ENCODE measurements at regions of chr13 and their contacts with region 1.

Region 1: DNA sequence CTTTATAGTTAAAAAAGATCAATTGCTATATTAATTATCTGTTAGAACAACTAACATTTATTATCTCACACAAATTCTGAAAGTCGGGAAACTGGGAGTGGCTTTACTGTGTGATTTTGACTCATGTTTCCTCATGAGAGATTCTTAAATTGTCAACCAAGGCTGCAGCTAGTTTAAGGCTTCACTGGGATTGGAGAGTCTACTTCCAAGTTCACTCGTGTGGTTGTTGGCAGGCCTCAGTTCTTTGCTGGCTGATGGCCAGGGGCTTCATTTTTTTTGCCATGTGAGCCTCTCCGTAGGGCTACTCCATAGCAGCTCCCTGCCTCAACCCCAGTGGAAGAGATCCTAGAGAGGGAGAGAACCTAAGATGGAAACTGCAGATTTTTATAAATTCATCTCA is 24.5 kb upstream of the LPAR6 start:
- DNase-seq: peak; percentile 56 to 65
- ATAC-seq: peak in 3 of 4 donors; percentile 42 to 66 (median 50)
- H3K4me3 ChIP-seq: no peak overlapping the region
- H3K27ac ChIP-seq: peak overlapping the region; percentile 14
- H3K4me1 ChIP-seq: peaks cover 22% of the 10 kb centered on the region
- H3K27me3 ChIP-seq: no peaks in the 10 kb centered on the region
- CTCF ChIP-seq: no peak

Region 2: GRCh38 chr13:48448959-48449614 is 11.7 kb after region 1 on chr13:
- intact Hi-C with region 1: loop called in 1 of 2 experiments (anchors 1 kb)
- DNase-seq: no peak
- ATAC-seq: no peak
- H3K4me3 ChIP-seq: no peak overlapping the region
- H3K27ac ChIP-seq: no peak overlapping the region
- H3K4me1 ChIP-seq: peaks cover 3% of the 10 kb centered on the region
- H3K27me3 ChIP-seq: no peaks in the 10 kb centered on the region
- CTCF ChIP-seq: no peak

Region 3: DNA sequence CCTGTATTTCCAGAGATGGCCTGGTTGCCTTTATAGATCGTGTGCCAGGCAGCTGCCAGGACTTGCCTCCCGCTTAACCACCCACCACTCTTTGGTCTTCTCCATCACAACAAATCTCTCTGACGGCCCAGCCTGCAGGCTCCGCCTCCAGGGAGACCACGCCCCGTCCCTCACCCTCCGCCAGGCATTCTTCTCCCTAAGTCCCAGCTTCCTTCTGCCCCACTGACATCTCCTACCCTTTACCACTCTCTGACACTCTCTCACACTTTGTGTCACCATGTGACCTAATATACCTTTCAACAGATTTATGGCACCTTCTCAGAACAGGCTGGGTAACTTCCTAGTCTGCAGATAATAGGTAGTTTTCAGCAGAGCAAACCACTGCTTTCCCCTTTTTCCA is 911.4 kb after region 1 on chr13:
- intact Hi-C with region 1: no loop called
- DNase-seq: no peak
- ATAC-seq: no peak
- H3K4me3 ChIP-seq: no peak overlapping the region
- H3K27ac ChIP-seq: no peak overlapping the region
- H3K4me1 ChIP-seq: no peaks in the 10 kb centered on the region
- H3K27me3 ChIP-seq: no peaks in the 10 kb centered on the region
- CTCF ChIP-seq: no peak

Measured in psoas muscle (tissue), 8 donors.